Activated T-helper 1 cell treated with anti-CD3 and anti-CD28 coated beads, Interleukin-12 subunit alpha, Interleukin-12 subunit beta, Interleukin-2, Interleukin-4 antibody, amounts not matched to agents 30 ng/mL and 10 ng/mL and 1 ng/mL, durations not matched to agents 14 hours and 24 hours and 36 hours (primary cell): ENCODE measurements at regions of chr10 and their contacts with region 1.

Region 1: GRCh38 chr10:22573820-22574569 is 140.4 kb downstream of the PIP4K2A start:
- DNase-seq: no peak
- H3K4me3 Mint-ChIP-seq: no peak overlapping the region
- H3K27ac Mint-ChIP-seq: peak overlapping the region; percentile 44
- H3K4me1 Mint-ChIP-seq: peaks cover 46% of the 10 kb centered on the region
- H3K27me3 Mint-ChIP-seq: no peaks in the 10 kb centered on the region

Region 2: DNA sequence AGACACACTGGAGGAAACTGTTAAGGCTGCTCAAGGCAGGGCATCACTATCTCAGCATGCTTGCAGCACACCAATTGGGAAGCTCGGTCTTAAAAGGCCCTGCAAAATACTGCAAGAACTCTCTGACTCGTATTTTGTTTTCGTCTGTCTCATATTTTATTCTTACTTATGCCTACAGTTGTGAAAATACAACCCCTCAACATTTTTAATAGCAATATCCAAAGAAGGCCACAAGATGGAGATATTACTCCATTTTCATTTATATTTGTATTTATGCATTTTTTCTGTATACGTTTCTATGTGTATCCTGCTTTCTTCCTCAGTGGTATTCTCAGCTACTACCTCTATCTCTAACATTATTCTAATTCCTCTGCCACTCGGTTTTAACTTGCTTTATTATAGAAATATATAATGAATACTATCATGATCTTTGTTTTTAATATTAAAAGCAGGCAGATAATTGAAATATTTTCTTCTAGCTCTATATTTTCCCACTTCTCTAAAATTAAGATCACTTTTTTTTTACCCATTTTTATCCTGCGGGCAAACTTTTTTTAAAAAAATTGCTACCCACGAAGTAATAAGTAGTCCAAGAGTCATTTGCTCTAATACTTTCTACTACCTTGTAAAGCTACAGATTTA is 580.5 kb before region 1 on chr10:
- intact Hi-C with region 1: loop called (anchors 1 kb)
- DNase-seq: no peak
- H3K4me3 Mint-ChIP-seq: no peak overlapping the region
- H3K27ac Mint-ChIP-seq: no peak overlapping the region
- H3K4me1 Mint-ChIP-seq: peaks cover 29% of the 10 kb centered on the region
- H3K27me3 Mint-ChIP-seq: no peaks in the 10 kb centered on the region

Region 3: DNA sequence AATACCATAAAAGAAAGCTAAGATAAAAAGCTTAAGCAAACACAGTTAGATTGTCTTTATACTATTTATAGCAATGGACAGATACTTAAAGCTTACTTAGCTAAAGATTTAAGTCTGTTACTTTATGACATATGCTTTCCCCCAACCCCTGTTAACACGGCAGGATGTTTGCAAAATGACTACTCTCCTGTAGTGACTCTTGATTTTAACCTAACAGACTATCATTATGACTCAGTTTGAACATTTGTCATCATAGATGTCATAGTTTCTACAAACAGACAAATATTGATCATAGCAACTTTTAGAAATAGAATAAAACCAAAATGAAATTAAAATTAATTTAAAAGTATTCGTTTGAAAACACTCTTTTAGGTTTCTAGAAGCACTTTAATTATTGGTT is 265.6 kb before region 1 on chr10:
- intact Hi-C with region 1: loop called (anchors 1 kb)
- DNase-seq: peak; percentile 41
- H3K4me3 Mint-ChIP-seq: no peak overlapping the region
- H3K27ac Mint-ChIP-seq: peak overlapping the region; percentile 71
- H3K4me1 Mint-ChIP-seq: peaks cover 29% of the 10 kb centered on the region
- H3K27me3 Mint-ChIP-seq: peaks cover 1% of the 10 kb centered on the region

Region 4: DNA sequence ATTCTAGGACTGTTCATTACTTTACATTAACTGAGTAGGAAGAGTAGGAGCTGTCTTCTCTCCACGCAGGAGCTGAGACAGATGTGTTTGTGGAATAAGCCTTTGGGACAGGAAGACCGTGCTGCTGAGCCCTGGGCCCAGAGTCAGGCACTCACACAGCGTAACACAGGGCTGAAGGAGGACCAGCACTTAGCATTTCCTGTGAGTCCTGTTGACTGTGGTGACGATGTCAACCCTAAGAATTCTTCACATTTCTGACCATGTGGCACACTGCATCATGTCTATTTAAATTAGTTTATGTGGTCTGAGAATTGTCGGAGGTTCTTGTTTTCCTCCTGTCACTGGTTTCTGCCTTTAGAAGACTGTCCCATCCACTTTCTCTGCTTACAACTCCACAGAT is 23.1 kb after region 1 on chr10:
- intact Hi-C with region 1: loop called (anchors 1 kb)
- DNase-seq: no peak
- H3K4me3 Mint-ChIP-seq: no peak overlapping the region
- H3K27ac Mint-ChIP-seq: peak overlapping the region; percentile 45
- H3K4me1 Mint-ChIP-seq: peaks cover 55% of the 10 kb centered on the region
- H3K27me3 Mint-ChIP-seq: no peaks in the 10 kb centered on the region

Region 5: GRCh38 chr10:22648547-22648961 is 74.6 kb after region 1 on chr10:
- intact Hi-C with region 1: loop called (anchors 2 kb)
- DNase-seq: no peak
- H3K4me3 Mint-ChIP-seq: peak overlapping the region; percentile 75
- H3K27ac Mint-ChIP-seq: peak overlapping the region; percentile 96
- H3K4me1 Mint-ChIP-seq: peaks cover 91% of the 10 kb centered on the region
- H3K27me3 Mint-ChIP-seq: no peaks in the 10 kb centered on the region

Region 6: GRCh38 chr10:22856444-22857074 is 282.6 kb after region 1 on chr10:
- intact Hi-C with region 1: no loop called
- DNase-seq: no peak
- H3K4me3 Mint-ChIP-seq: no peak overlapping the region
- H3K27ac Mint-ChIP-seq: no peak overlapping the region
- H3K4me1 Mint-ChIP-seq: no peaks in the 10 kb centered on the region
- H3K27me3 Mint-ChIP-seq: no peaks in the 10 kb centered on the region

Region 7: GRCh38 chr10:22988581-22989360 is 414.8 kb after region 1 on chr10:
- intact Hi-C with region 1: loop called (anchors 1 kb)
- DNase-seq: peak; percentile 57
- H3K4me3 Mint-ChIP-seq: no peak overlapping the region
- H3K27ac Mint-ChIP-seq: no peak overlapping the region
- H3K4me1 Mint-ChIP-seq: peaks cover 22% of the 10 kb centered on the region
- H3K27me3 Mint-ChIP-seq: peaks cover 9% of the 10 kb centered on the region